Colonic mucosa (tissue), 4 donors: ENCODE measurements at regions of chrX and their contacts with region 1.

Region 1: GRCh38 chrX:2584251-2585157 is 83.7 kb upstream of the DHRSX start:
- DNase-seq: no peak
- H3K4me3 ChIP-seq: no peak overlapping the region
- H3K27ac ChIP-seq: no peak overlapping the region
- H3K4me1 ChIP-seq: no peaks in the 10 kb centered on the region
- H3K27me3 ChIP-seq: peaks cover 13% of the 10 kb centered on the region
- CTCF ChIP-seq: no peak

Region 2: GRCh38 chrX:1649621-1650020 is 934.9 kb before region 1 on chrX:
- intact Hi-C with region 1: loop called (anchors 5 kb)
- DNase-seq: no peak
- H3K4me3 ChIP-seq: no peak overlapping the region
- H3K27ac ChIP-seq: no peak overlapping the region
- H3K4me1 ChIP-seq: no peaks in the 10 kb centered on the region
- H3K27me3 ChIP-seq: no peaks in the 10 kb centered on the region
- CTCF ChIP-seq: no peak